Right ventricle myocardium inferior (tissue), 1 donor: ENCODE measurements at regions of chr20 and their contacts with region 1.

Region 1: GRCh38 chr20:34069341-34070078 is 42.5 kb downstream of the EIF2S2 start:
- DNase-seq: no peak
- ATAC-seq: peak; percentile 88

Region 2: DNA sequence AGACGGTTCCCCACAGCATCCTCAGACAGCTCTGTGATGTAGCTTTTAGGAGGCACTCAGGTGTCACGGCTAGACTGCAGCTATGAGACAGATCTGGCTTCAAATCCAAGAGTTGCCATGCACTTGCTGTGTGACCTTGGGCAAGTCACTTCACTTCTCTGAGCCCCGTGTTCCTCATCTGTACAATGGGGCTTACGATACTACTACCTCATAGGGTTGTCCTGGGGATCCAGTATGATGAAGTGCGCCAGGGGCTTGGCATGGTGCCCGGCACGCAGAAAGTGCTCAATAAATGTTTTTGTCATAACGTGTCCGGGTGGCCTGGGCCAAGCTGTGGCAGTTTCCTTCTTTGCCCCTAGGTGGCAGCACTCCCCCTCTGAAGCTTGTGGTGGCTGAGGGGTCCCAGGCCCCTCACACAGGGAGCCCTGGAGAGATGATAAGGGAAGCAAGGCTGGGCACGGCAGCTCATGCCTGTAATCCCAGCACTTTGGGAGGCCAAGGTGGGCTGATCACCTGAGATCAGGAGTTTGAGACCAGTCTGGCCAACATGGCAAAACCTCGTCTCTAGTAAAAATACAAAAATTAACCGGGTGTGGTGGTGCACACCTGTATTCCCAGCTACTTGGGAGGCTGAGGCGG is 277.4 kb before region 1 on chr20:
- intact Hi-C with region 1: loop called (anchors 2 kb)
- DNase-seq: no peak
- ATAC-seq: peak; percentile 22

Region 3: DNA sequence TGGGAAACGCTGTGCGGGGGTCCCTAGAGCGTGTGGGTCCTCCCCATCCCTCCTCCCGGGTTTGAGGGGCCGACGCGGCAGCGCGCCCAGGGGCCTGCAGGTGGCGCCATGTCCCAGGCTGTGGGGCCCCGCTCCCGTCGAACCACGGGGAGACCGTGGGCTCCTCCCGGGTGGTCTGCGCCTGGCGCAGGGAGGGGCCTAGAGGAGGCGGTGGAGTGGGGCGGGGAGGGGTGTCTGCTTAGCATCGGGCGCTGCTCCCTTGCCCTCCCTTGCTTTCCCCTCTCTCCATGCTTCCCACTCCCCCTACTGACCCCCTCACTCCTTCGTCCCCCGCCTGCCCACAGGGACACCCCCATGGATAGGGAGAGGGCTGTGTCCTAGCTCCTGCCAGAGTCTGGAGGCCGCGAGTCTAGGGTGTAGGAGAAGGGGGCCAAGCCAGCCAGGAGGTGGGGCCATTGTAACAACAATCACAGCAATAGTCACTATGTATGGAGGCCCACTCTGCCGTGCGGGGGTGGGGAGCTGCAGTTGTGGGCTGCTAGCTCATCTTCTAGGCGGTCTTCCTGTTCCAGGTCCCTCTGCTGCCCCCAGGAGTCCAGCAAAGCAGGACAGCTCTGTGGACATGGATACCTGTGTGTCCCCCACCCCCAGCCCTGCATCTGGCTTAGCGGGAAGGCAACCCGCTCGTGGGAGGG is 206.7 kb before region 1 on chr20:
- intact Hi-C with region 1: loop called (anchors 2 kb)
- DNase-seq: peak; percentile 77
- ATAC-seq: peak; percentile 64

Region 4: GRCh38 chr20:33915726-33916331 is 153.7 kb before region 1 on chr20:
- intact Hi-C with region 1: loop called (anchors 5 kb)
- DNase-seq: peak; percentile 72
- ATAC-seq: peak; percentile 13

Region 5: DNA sequence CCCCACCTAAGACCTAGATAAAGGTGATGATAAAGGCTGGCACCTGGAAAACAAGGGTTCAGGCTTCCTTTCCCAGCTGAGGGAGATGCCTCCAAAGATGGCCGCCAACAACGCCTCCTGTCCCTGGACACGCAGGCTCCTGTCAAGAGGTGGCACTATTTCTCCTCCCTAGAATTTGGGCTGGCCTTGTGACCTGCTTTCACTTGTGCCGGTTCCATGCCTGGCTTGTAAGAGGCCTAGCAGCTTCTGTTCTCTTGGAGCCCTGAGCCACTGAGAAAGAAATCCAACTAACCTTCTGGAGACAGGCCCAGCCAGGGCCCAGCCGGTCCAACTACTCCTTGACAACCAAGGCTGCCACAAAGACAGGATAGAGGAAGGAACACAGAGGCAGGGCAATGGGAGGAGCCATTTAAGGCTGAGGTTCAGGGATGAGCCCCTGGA is 136.0 kb before region 1 on chr20:
- intact Hi-C with region 1: loop called (anchors 1 kb)
- DNase-seq: peak; percentile 73
- ATAC-seq: peak; percentile 92

Region 6: DNA sequence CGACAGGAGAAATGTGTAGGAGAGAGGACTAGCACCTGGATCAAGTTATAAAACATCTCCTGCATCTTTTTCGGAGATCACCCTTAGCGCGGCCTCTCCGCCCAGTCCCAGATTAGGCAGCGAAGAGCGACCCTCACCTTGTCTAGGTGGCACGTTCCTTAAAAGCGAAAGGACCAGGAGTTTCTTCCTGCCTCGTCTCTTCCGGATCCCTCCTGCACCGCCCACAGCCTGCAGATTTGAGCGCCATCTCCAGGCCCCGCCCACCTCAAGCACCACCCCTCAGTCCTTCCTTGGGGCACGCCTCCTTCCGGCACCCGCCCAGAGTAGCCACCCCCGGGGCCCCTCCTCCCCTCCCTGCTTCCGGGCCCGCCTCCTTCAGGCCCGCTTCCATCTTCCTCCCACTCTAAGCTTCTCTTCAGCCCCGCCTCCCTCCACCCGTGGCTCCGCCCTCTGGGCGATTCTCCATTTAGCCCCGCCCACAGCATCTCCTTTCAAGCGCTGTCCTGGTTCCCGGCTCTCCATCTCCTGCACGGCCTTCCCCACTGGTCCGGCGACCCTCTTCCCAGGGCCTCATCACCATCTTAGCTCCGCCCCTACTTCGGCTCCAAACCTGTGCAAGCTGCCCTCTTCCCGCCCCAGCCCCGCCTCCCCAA is 76.5 kb before region 1 on chr20:
- intact Hi-C with region 1: loop called (anchors 1 kb)
- DNase-seq: peak; percentile 99
- ATAC-seq: peak; percentile 95